CD8-positive, alpha-beta memory T cell (primary cell): ENCODE measurements at regions of chr1 and their contacts with region 1.

Region 1: DNA sequence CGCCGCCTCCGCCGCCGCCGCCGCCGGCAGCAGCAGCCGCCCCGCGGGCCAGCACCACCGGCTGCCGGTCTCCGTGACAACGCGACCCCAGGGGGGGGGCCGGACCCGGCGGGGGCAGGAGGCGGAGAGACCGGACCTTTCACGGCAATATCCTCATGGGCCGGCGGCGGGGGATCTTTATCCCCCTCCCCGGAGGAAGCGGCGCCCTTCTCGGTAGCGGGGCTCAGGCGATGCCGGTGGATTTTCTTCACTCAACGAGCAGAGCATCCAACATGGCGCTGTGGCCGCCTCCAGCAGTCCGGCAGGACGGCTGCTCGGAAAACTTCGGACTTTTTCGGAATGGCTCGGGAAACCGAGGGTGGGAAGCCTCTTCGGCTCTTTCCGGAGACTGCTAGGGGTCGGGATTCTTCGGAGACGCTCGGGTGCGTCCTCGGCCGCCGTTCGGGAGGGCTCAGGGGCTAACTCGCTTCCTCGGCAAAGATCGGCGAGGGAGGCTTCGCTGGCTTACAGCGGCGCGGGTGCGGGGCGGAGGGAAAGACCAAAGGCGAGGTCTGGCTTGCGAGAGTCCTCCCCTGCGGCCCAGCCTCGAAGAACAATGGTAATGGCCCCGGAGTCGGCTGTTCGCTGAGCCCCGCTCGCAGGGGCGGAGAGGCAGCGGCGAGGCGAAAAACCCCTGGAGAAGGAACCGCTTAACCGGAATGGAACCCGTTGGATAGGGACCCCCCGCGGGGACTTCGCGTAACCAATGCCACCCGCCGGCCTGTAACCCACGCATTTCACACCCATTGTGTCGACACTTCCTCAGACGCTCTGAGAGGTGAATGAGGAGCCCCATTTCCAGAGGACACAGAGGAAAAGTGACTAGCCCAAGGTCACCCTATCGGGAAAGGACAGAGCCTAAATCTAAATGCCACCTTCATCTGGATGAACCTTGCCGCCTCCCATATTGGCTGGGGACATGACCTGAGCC is at the start of gene EIF4G3:
- DNase-seq: peak; percentile 98 to 100 (median 99)
- H3K4me3 ChIP-seq: peak within 1 kb of the TSS; percentile 71
- H3K4me3 Mint-ChIP-seq: peak within 1 kb of the TSS; percentile 89 to 96 (median 92)
- H3K27ac ChIP-seq: peak within 1 kb of the TSS; percentile 83
- H3K27ac Mint-ChIP-seq: peak within 1 kb of the TSS; percentile 84 to 98 (median 94)
- H3K4me1 ChIP-seq: peaks cover 16% of the 10 kb centered on the region
- H3K4me1 Mint-ChIP-seq: peaks cover 25 to 34% (median 26%) of the 10 kb centered on the region in 3 donors
- H3K27me3 ChIP-seq: no peaks in the 10 kb centered on the region
- H3K27me3 Mint-ChIP-seq: peaks cover 0 to 6% of the 10 kb centered on the region in 2 donors
- total RNA-seq, gene EIF4G3: 46.8 to 51.3 TPM

Region 2: DNA sequence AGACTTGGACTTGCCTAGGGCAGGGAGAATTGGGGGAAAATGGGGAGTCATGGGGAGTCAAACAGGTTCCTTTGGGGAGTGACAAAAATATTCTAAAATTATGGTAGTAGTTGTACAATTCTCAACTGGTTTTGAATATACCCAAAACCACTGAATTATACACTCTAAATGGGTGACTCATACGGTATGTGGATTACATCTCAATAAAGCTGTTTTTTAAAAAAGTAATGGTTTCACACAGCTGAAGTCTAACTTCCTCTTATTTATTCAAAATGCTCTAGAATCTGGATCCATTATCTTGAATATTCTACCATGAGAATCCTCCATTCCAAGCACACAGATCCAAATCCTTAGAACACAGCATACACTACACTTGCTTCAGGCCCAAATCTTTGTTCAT is 11.2 kb before region 1 on chr1:
- CTCF ChIA-PET with region 1: no interaction called
- POLR2A ChIA-PET with region 1: no interaction called
- DNase-seq: no peak
- H3K4me3 ChIP-seq: no peak overlapping the region
- H3K4me3 Mint-ChIP-seq: no peak overlapping the region
- H3K27ac ChIP-seq: no peak overlapping the region
- H3K27ac Mint-ChIP-seq: peak overlapping the region in 5 of 8 donors; percentile 30 to 84 (median 56)
- H3K4me1 ChIP-seq: no peaks in the 10 kb centered on the region
- H3K4me1 Mint-ChIP-seq: peaks cover 11 to 22% (median 15%) of the 10 kb centered on the region in 3 donors
- H3K27me3 ChIP-seq: no peaks in the 10 kb centered on the region
- H3K27me3 Mint-ChIP-seq: no peaks in the 10 kb centered on the region

Region 3: DNA sequence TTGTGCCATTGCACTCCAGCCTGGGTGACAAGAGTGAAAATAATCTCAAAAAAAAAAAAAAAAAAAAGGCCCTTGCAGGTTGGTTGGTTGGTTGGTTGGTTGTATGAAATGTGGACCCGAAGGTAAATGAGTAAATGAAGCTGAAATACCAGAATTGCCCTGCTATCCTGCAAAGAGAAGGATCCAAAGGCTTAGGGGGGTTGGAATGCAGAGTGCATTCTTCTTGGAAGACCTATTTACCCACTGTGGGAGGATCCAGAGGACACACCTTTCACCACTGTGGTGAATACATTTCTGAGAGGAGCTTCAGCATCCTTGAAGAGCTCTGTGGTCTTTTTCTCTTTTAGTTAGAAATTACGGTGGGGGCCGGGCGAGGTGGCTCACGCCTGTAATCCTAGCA is 28.5 kb after region 1 on chr1:
- CTCF ChIA-PET with region 1: no interaction called
- POLR2A ChIA-PET with region 1: no interaction called
- DNase-seq: no peak
- H3K4me3 ChIP-seq: no peak overlapping the region
- H3K4me3 Mint-ChIP-seq: no peak overlapping the region
- H3K27ac ChIP-seq: no peak overlapping the region
- H3K27ac Mint-ChIP-seq: no peak overlapping the region
- H3K4me1 ChIP-seq: no peaks in the 10 kb centered on the region
- H3K4me1 Mint-ChIP-seq: no peaks in the 10 kb centered on the region
- H3K27me3 ChIP-seq: no peaks in the 10 kb centered on the region
- H3K27me3 Mint-ChIP-seq: peaks cover 0 to 5% of the 10 kb centered on the region in 2 donors

Region 4: DNA sequence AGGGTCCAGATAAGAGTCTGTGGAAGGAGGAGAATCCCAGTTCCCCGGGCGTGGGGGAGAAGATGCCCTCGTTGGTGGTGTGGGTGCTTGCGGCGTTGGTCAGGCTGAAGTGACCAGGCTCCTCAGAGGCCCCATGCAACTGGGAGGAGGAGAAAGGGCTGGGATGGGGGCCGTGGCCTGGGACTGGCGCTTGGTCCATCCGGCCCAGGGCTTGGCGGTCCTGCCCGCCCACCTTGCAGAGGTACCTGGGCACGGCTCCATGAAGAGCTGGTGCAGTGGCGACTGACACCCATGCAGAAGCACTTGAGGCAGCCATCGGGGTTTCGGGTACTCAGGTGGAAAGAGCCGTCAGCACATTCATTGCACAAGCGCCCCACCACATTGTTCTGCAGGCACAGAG is 699.4 kb after region 1 on chr1:
- CTCF ChIA-PET with region 1: no interaction called
- POLR2A ChIA-PET with region 1: interaction called, 11 read pairs
- DNase-seq: no peak
- H3K4me3 ChIP-seq: no peak overlapping the region
- H3K4me3 Mint-ChIP-seq: no peak overlapping the region
- H3K27ac ChIP-seq: no peak overlapping the region
- H3K27ac Mint-ChIP-seq: no peak overlapping the region
- H3K4me1 ChIP-seq: no peaks in the 10 kb centered on the region
- H3K4me1 Mint-ChIP-seq: no peaks in the 10 kb centered on the region
- H3K27me3 ChIP-seq: no peaks in the 10 kb centered on the region
- H3K27me3 Mint-ChIP-seq: peaks cover 2 to 7% of the 10 kb centered on the region in 2 donors